ENCODE measurements at regions of chr15 and their contacts with region 1.

Region 1: GRCh38 chr15:92521624-92522008 is 127.9 kb downstream of the ST8SIA2 start:
- DNase-seq: peak; percentile 86
- H3K4me3 ChIP-seq: no peak overlapping the region
- H3K27ac ChIP-seq: no peak overlapping the region
- H3K4me1 ChIP-seq: no peaks in the 10 kb centered on the region
- H3K27me3 ChIP-seq: no peaks in the 10 kb centered on the region
- CTCF ChIP-seq: peak; percentile 60 to 94 (median 85)
- POLR2A ChIP-seq: no peak

Region 2: DNA sequence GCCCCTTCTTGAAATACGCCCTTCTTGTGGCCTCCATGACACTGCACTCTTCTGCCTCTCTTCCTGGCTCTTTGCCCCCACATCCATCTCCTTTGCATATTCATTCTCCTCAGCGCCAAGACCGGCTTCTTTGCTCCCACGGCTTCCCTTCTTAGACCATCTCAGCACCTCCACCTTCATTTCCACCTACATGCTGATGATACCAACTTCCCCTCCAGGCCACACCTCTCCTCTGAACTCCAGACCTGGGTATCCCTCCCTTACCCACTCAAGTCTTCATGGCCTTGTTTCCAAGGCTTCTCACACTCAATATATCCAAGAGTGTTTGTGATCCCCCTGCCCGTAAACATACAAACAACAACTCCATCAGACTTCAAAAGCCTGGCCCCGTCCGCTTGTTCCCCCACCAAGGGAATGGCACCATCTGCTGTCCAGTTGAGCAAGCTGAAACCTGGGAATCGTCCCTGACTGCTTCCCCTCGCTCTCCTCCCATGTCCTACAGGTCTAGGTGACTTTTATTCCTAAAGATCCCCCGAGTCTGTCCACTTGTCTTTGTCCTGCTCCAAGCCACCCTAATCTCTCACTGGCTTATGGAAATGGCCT is 161.7 kb after region 1 on chr15:
- intact Hi-C with region 1: loop called (anchors 1 kb)
- DNase-seq: peak; percentile 39
- H3K4me3 ChIP-seq: no peak overlapping the region
- H3K27ac ChIP-seq: no peak overlapping the region
- H3K4me1 ChIP-seq: no peaks in the 10 kb centered on the region
- H3K27me3 ChIP-seq: no peaks in the 10 kb centered on the region
- CTCF ChIP-seq: peak in 3 of 4 experiments; percentile 50 to 73 (median 70)
- POLR2A ChIP-seq: no peak

Region 3: GRCh38 chr15:92780843-92781242 is 259.2 kb after region 1 on chr15:
- intact Hi-C with region 1: loop called (anchors 10 kb)
- DNase-seq: no peak
- H3K4me3 ChIP-seq: no peak overlapping the region
- H3K27ac ChIP-seq: no peak overlapping the region
- H3K4me1 ChIP-seq: no peaks in the 10 kb centered on the region
- H3K27me3 ChIP-seq: no peaks in the 10 kb centered on the region
- CTCF ChIP-seq: no peak
- POLR2A ChIP-seq: no peak